Activated CD4-positive, alpha-beta memory T cell treated with anti-CD3 and anti-CD28 coated beads for 36 hours (primary cell): ENCODE measurements at regions of chr2 and their contacts with region 1.

Region 1: GRCh38 chr2:218269899-218270720 is at the starts of genes AAMP and PNKD:
- DNase-seq: peak; percentile 100
- H3K4me3 Mint-ChIP-seq: peak within 1 kb of the TSS; percentile 84
- H3K27ac Mint-ChIP-seq: peak within 1 kb of the TSS; percentile 82
- H3K4me1 Mint-ChIP-seq: peaks cover 29% of the 10 kb centered on the region
- H3K27me3 Mint-ChIP-seq: no peaks in the 10 kb centered on the region
- total RNA-seq, gene AAMP: 60.8 to 65.6 TPM
- total RNA-seq, gene PNKD: 18.4 to 19.4 TPM

Region 2: GRCh38 chr2:218186355-218186766 is 83.7 kb before region 1 on chr2:
- CTCF ChIA-PET with region 1: interaction called, 11 read pairs
- POLR2A ChIA-PET with region 1: no interaction called
- intact Hi-C with region 1: loop called (anchors 1 kb)
- DNase-seq: peak; percentile 81
- H3K4me3 Mint-ChIP-seq: no peak overlapping the region
- H3K27ac Mint-ChIP-seq: no peak overlapping the region
- H3K4me1 Mint-ChIP-seq: peaks cover 6% of the 10 kb centered on the region
- H3K27me3 Mint-ChIP-seq: no peaks in the 10 kb centered on the region

Region 3: GRCh38 chr2:218257390-218257981 is 12.6 kb before region 1 on chr2:
- CTCF ChIA-PET with region 1: interaction called, 28 read pairs
- POLR2A ChIA-PET with region 1: interaction called, 5 read pairs
- intact Hi-C with region 1: loop called (anchors 1 kb)
- DNase-seq: peak; percentile 85
- H3K4me3 Mint-ChIP-seq: no peak overlapping the region
- H3K27ac Mint-ChIP-seq: peak overlapping the region; percentile 84
- H3K4me1 Mint-ChIP-seq: peaks cover 25% of the 10 kb centered on the region
- H3K27me3 Mint-ChIP-seq: no peaks in the 10 kb centered on the region

Region 4: DNA sequence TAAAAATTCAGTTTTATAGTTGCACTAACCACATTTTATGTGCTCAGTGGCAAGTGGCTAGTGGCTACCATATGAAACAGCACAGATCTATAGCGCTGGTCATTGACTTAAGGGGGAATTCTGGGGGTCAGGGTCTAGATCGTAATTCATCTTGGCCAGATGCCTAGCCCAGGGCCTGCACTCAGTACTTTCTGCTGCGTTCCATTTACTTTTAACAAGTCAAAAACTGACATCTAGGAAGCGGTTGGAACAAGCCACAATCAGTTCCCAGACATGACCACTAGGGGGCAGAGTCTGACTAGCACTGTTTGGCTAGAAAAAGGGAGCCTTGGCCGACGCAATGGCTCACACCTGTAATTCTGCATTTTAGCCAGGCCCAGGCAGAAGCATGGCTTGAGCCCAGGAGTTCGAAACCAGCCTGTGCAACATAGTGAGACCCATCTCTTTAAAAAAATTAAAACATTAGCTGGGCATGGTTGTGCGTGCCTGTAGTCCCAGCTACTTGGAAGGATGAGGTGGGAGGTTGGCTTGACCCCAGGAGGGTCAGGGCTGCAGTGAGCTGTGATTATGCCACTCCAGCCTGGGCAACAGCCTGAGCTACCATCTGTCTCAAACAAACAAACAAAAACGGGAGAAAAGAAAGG is 31.2 kb after region 1 on chr2:
- CTCF ChIA-PET with region 1: interaction called, 119 read pairs
- POLR2A ChIA-PET with region 1: no interaction called
- intact Hi-C with region 1: loop called (anchors 1 kb)
- DNase-seq: peak; percentile 92
- H3K4me3 Mint-ChIP-seq: no peak overlapping the region
- H3K27ac Mint-ChIP-seq: peak overlapping the region; percentile 42
- H3K4me1 Mint-ChIP-seq: peaks cover 5% of the 10 kb centered on the region
- H3K27me3 Mint-ChIP-seq: no peaks in the 10 kb centered on the region

Region 5: GRCh38 chr2:218418717-218419458 is 148.8 kb after region 1 on chr2 and contains the start of gene VIL1:
- CTCF ChIA-PET with region 1: no interaction called
- POLR2A ChIA-PET with region 1: no interaction called
- intact Hi-C with region 1: no loop called
- DNase-seq: no peak
- H3K4me3 Mint-ChIP-seq: no peak within 1 kb of the TSS
- H3K27ac Mint-ChIP-seq: no peak within 1 kb of the TSS
- H3K4me1 Mint-ChIP-seq: no peaks in the 10 kb centered on the region
- H3K27me3 Mint-ChIP-seq: no peaks in the 10 kb centered on the region
- total RNA-seq, gene VIL1: not detected

Region 6: GRCh38 chr2:218568190-218569037 is 298.3 kb after region 1 on chr2 and contains the starts of genes CNOT9 and USP37:
- CTCF ChIA-PET with region 1: no interaction called
- POLR2A ChIA-PET with region 1: interaction called, 3 read pairs
- intact Hi-C with region 1: loop called (anchors 1 kb)
- DNase-seq: peak; percentile 100
- H3K4me3 Mint-ChIP-seq: peak within 1 kb of the TSS; percentile 96
- H3K27ac Mint-ChIP-seq: peak within 1 kb of the TSS; percentile 100
- H3K4me1 Mint-ChIP-seq: peaks cover 54% of the 10 kb centered on the region
- H3K27me3 Mint-ChIP-seq: no peaks in the 10 kb centered on the region
- total RNA-seq, gene CNOT9: 84.7 to 87.3 TPM
- total RNA-seq, gene USP37: 27.2 to 28.7 TPM

Region 7: GRCh38 chr2:218717262-218717661 is 447.2 kb after region 1 on chr2:
- CTCF ChIA-PET with region 1: no interaction called
- POLR2A ChIA-PET with region 1: no interaction called
- intact Hi-C with region 1: loop called (anchors 1 kb)
- DNase-seq: no peak
- H3K4me3 Mint-ChIP-seq: no peak overlapping the region
- H3K27ac Mint-ChIP-seq: no peak overlapping the region
- H3K4me1 Mint-ChIP-seq: peaks cover 16% of the 10 kb centered on the region
- H3K27me3 Mint-ChIP-seq: no peaks in the 10 kb centered on the region